ENCODE measurements at regions of chr20 and their contacts with region 1.

Region 1: GRCh38 chr20:62500237-62500864 is 24.6 kb upstream of the GATA5 start:
- DNase-seq: peak; percentile 82 to 89 (median 86)
- ATAC-seq: peak; percentile 89
- H3K4me3 ChIP-seq: no peak overlapping the region
- H3K27ac ChIP-seq: no peak overlapping the region; the same call in 2 of the 3 replicates
- H3K4me1 ChIP-seq: peaks cover 9 to 64% of the 10 kb centered on the region in 2 experiments
- H3K27me3 ChIP-seq: no peaks in the 10 kb centered on the region; a peak in 1 of 5 replicates
- CTCF ChIP-seq: peak; percentile 88 to 92 (median 89)
- EP300 ChIP-seq: no peak
- POLR2A ChIP-seq: no peak
- RAD21 ChIP-seq: peak; percentile 84 to 95

Region 2: DNA sequence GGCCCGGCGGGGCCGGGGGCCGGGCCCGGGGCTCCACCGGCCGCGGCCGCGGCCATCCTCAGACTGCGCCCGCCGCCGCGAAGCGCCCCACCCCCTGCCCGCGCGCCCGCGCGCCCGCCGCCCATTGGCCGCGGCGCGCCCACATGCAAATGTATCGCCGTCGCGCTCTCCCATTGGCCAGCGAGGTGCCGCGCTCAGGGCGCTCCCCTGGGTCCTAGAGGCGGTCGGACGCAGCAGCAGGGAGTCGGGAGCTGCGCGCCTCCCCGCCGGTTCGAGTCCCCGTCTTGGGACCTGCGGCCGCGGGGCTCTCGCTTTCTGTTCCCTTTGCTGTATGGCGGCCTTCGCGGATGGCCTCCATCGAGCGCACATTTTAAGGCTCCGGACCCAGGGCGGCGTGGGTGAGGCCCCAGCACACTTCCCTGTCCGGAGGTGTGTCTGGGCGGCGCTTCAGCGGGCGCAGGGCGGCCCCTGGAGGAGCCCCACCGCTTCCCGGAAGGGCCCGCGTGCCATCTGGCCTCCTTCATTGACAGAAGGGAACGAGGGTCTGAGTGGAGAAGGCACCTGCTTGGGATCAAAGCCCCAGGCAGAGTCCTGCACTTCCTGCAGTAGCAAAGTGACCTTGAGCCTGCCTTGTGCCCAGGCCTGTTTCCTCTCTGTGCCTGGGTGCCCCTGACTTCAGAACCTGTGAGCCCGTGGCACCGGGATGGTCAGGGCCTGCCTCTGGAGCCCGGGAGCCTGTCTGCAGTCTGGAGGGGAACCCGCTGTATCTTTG is 92.9 kb before region 1 on chr20 and contains the start of gene CABLES2:
- CTCF ChIA-PET with region 1: interaction called, 6 read pairs
- POLR2A ChIA-PET with region 1: interaction called, 3 read pairs
- in situ Hi-C with region 1: no loop called
- intact Hi-C with region 1: loop called (anchors 1 kb)
- DNase-seq: peak; percentile 95 to 96 (median 96)
- ATAC-seq: peak; percentile 94
- H3K4me3 ChIP-seq: peak within 1 kb of the TSS; percentile 58
- H3K27ac ChIP-seq: peak within 1 kb of the TSS; percentile 65
- H3K4me1 ChIP-seq: peaks cover 17 to 88% of the 10 kb centered on the region in 2 experiments
- H3K27me3 ChIP-seq: no peaks in the 10 kb centered on the region
- CTCF ChIP-seq: peak in 2 of 3 experiments; percentile 14 to 36; a peak in 2 of 6 replicates
- EP300 ChIP-seq: no peak
- POLR2A ChIP-seq: peak; percentile 52; the same call in 1 of the 2 replicates
- RAD21 ChIP-seq: peak in 1 of 2 experiments; percentile 44; a peak in 1 of 4 replicates
- polyA plus RNA-seq, gene CABLES2: 0.46 to 0.72 TPM

Region 3: GRCh38 chr20:62576815-62577506 is 76.6 kb after region 1 on chr20:
- CTCF ChIA-PET with region 1: no interaction called
- POLR2A ChIA-PET with region 1: no interaction called
- in situ Hi-C with region 1: no loop called
- intact Hi-C with region 1: no loop called
- DNase-seq: peak; percentile 25 to 68 (median 60)
- ATAC-seq: peak; percentile 67
- H3K4me3 ChIP-seq: no peak overlapping the region
- H3K27ac ChIP-seq: no peak overlapping the region
- H3K4me1 ChIP-seq: peaks cover 1 to 26% of the 10 kb centered on the region in 2 experiments; a peak in 3 of 5 replicates
- H3K27me3 ChIP-seq: peaks cover 39 to 78% of the 10 kb centered on the region in 2 experiments
- CTCF ChIP-seq: no peak
- EP300 ChIP-seq: no peak
- POLR2A ChIP-seq: no peak
- RAD21 ChIP-seq: no peak

Region 4: GRCh38 chr20:62611819-62612218 is 111.5 kb after region 1 on chr20:
- CTCF ChIA-PET with region 1: interaction called, 15 read pairs
- POLR2A ChIA-PET with region 1: interaction called, 3 read pairs
- in situ Hi-C with region 1: loop called (anchors 5 kb)
- intact Hi-C with region 1: loop called (anchors 1 kb)
- DNase-seq: no peak
- ATAC-seq: no peak
- H3K4me3 ChIP-seq: no peak overlapping the region
- H3K27ac ChIP-seq: no peak overlapping the region
- H3K4me1 ChIP-seq: peaks cover 0 to 27% of the 10 kb centered on the region in 2 experiments; a peak in 2 of 5 replicates
- H3K27me3 ChIP-seq: peaks cover 36 to 66% of the 10 kb centered on the region in 2 experiments
- CTCF ChIP-seq: no peak
- EP300 ChIP-seq: no peak
- POLR2A ChIP-seq: no peak
- RAD21 ChIP-seq: no peak

Region 5: DNA sequence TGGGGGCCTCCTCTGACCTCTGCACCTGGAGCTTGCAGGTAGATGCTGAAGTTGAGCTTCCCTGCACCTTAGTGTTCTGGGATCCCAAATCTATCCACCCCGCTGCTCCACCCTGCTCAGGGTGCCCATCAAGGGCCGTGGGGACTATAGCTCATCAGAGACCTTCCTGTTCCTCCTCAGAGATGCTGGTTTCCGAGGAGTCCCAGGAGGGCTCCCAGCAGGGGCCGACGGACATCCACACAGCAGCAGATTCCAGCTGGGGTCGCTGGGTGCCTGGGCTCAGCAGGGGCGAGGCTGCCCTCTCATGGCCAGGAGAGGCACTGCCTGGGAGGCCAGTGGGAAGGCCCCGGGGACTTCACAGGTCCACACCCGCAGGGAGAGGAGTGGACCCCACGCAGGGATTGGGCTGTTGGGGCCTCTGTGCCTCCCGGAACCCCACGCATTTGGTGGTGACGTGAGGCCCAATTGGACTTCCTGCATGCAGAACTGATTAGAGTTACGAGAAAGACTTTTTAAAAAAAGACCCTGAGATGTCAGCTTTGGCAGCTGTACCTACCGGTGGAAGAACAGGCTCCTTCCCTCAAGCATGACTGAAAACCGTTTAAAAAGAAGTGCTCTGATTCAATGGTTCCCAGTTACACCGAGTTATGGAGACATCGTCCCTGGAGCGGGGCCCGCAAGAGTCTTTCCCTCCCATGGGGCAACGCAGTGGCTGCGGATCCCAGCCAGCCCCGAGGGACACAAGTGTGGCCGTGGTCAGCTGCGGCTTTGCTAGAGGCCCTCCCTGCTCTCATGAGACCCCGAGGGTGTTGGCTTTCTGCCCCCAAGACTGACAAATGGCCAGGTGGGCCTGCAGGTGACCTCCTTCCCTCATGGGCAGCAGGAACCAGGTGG is 116.6 kb after region 1 on chr20:
- CTCF ChIA-PET with region 1: interaction called, 15 read pairs
- POLR2A ChIA-PET with region 1: interaction called, 3 read pairs
- in situ Hi-C with region 1: loop called (anchors 5 kb)
- intact Hi-C with region 1: loop called (anchors 1 kb)
- DNase-seq: peak; percentile 82 to 87 (median 86)
- ATAC-seq: peak; percentile 100
- H3K4me3 ChIP-seq: no peak overlapping the region
- H3K27ac ChIP-seq: no peak overlapping the region
- H3K4me1 ChIP-seq: peaks cover 0 to 44% of the 10 kb centered on the region in 2 experiments; a peak in 2 of 5 replicates
- H3K27me3 ChIP-seq: peaks cover 8 to 21% of the 10 kb centered on the region in 2 experiments
- CTCF ChIP-seq: peak; percentile 96 to 98 (median 96)
- EP300 ChIP-seq: no peak
- POLR2A ChIP-seq: no peak
- RAD21 ChIP-seq: peak; percentile 91 to 98

Region 6: GRCh38 chr20:62808211-62808865 is 308.0 kb after region 1 on chr20:
- CTCF ChIA-PET with region 1: interaction called, 4 read pairs
- POLR2A ChIA-PET with region 1: no interaction called
- in situ Hi-C with region 1: loop called (anchors 10 kb)
- intact Hi-C with region 1: no loop called
- DNase-seq: peak; percentile 66 to 81 (median 72)
- ATAC-seq: peak; percentile 81
- H3K4me3 ChIP-seq: no peak overlapping the region
- H3K27ac ChIP-seq: no peak overlapping the region
- H3K4me1 ChIP-seq: peaks cover 11 to 64% of the 10 kb centered on the region in 2 experiments
- H3K27me3 ChIP-seq: no peaks in the 10 kb centered on the region
- CTCF ChIP-seq: peak; percentile 86 to 87 (median 86)
- EP300 ChIP-seq: no peak
- POLR2A ChIP-seq: no peak
- RAD21 ChIP-seq: peak; percentile 78 to 83